RWPE1 (cell line): ENCODE measurements at regions of chr5 and their contacts with region 1.

Region 1: DNA sequence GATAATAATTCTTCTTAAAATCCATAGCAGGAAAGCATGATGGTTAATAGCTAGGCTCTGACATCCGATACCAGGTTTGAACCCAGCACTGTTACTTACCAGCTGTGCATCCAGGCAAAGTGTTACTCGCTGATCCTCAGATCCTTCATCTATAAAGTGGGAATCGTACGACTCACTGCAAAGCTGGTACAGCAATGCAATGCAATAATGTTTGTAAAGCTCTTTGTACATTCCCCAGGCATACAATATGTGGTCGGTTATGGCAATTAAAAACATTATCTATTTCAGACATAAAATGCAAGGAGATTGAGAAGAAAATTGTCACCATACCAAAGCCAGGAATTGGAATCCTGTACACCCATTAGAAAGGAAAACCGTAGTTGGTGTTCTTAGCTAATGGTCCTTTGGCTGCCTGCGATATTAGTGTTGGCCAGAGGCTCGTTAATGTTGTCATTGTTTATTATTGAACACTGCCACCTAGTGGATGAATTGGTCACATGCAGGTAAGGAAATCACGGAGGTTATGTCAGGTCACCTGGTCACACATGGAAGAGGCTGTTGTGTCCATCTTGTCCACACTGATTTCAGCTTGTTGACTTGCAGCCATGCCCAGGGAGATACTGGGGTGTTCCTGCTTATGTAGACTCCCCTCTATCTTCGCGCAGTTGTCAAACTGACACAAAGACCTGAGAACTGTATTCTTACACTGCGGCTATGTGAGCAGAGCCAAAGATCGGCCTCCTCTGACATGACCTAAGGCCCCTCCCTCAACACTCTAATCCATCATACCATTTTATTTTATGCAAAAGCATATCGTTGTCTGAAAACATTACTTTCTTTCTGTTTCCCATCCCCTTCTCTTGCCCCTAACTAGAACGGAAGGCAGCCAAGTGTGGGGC is 87.5 kb upstream of the PPP2R2B start:
- DNase-seq: peak; percentile 72
- H3K27ac ChIP-seq: no peak overlapping the region
- CTCF ChIP-seq: peak; percentile 91

Region 2: DNA sequence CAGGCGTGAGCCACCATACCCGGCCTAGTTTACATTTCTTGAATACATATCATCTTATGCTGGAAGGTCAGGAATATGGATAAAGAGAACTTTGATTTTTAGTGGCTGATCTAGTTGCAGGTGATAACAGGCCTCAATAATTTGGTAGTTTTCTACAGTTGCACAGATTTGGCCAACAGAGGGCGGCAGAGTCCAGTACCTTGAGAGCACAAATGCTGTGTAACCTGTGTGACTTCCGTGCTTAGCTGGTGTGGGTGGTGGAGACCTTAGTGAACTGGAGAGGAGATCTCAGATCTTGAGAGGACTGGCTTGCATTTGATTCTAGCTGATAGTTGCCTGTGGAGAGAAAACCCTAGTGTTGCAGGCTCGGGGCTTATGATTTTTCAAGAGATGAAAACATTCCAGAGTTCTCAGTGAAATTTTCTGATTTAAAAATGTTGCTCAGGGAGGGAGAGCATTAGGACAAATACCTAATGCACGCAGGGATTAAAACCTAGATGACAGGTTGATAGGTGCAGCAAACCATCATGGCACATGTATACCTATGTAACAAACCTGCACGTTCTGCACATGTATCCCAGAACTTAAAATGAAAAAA is 432.7 kb before region 1 on chr5:
- CTCF ChIA-PET with region 1: interaction called, 12 read pairs
- POLR2A ChIA-PET with region 1: no interaction called
- DNase-seq: peak; percentile 68
- H3K27ac ChIP-seq: no peak overlapping the region
- CTCF ChIP-seq: peak; percentile 95

Region 3: GRCh38 chr5:146541958-146542849 is 423.8 kb before region 1 on chr5:
- CTCF ChIA-PET with region 1: interaction called, 70 read pairs
- POLR2A ChIA-PET with region 1: no interaction called
- DNase-seq: peak; percentile 82
- H3K27ac ChIP-seq: no peak overlapping the region
- CTCF ChIP-seq: peak; percentile 96

Region 4: DNA sequence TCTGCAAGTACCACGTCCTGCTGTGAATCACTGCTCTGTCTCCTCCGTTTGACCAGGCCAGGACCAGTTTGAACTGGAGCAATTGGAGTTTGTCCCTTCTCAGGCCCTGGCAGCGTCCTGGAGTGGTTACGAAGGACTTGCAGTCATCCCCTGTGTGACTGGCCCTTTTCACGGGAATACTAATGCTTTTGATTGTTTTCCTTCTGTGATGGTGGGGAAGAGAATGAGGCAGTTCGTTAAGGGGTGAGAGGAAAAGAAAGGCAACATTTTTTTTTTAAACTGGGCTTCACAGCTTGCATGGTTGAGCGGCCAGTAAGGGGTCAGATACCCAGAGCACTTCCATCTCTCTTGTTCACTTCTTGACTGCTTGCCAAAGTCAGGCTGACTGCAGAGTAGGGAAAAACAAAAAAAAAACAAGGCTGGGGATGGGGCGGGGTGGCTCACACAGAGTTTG is 115.3 kb after region 1 on chr5:
- CTCF ChIA-PET with region 1: no interaction called
- POLR2A ChIA-PET with region 1: no interaction called
- DNase-seq: no peak
- H3K27ac ChIP-seq: no peak overlapping the region
- CTCF ChIP-seq: no peak